Heart right ventricle (tissue), 16 donors: ENCODE measurements at regions of chr3 and their contacts with region 1.

Region 1: DNA sequence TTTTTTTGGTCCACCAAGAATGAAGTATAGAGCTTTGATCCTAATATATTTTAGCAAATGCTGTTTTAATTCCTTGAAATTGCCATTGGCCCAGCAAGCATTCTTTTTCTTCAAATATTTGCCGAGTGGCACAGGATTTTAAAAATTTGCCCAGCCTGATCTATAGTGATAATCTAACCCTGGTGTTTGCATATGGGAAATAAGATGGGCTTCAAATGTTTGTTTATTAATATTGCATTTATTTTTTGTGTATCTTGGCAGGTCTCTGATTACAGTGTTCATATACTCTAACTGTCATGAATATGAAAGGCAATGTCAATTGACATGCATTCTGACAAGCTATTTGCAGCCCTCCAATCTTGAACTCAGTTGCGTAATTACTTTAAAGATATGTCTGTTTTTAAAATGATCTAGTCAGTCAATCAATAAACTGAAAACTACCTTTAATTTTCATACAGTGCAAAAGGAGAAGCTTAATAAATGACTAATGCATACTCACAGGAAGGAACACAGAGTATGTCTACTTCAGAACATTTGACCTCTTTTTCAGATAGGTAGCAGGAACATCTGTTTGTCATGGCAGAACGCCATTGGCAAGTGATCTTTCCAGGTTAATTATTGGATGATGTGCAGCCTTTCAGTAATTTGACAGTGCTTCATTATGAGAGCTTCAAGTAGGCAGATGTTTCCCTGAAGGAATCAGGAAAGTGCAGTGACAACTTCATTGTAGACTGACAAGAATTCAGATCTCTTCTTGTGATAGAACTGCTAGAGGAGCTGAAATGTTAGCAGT is 324.8 kb downstream of the OTOL1 start:
- DNase-seq: no peak
- ATAC-seq: no peak
- H3K4me3 ChIP-seq: no peak overlapping the region
- H3K27ac ChIP-seq: no peak overlapping the region
- H3K4me1 ChIP-seq: no peaks in the 10 kb centered on the region
- H3K27me3 ChIP-seq: no peaks in the 10 kb centered on the region
- CTCF ChIP-seq: no peak

Region 2: DNA sequence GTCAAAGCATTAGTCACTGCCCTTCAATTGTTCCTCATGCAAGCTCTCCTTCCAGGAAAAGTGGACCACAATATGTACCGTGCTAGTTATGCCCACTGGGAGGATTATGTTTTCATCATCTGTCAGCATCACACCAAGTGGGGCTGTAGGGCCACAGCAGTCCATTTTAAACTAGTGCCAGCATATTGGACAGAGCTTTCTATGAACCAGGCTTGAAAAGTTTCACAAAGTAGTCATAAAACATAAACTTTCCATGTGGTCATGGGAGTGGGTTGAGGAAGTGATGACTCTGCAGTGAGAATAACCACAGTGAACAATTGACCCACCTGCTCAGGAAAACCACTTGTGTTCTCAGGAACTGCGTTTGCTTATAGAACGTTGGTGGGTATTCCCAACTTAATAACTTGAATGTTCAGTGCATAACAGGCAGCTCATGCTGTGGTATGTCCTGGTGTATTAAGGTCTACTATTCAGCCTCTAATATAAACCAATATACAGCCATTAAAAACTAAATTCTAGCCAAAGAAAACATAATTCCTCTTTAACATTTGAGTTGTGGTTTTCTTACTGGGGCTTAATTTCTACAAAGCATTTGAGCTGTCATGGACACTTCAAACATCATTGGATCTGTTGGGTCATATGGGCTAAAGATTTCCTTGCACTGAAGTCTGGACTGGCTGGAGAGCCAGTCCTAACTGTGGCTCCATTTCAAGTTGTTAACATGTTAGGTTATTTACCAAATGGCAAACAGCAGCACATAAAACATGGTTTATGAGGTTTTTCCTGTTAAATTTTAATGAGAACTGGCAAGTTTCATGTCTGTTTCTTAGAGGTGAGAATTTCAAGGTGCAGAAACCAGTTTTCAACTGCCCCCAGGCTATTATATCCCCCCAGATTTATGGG is 50.7 kb before region 1 on chr3:
- intact Hi-C with region 1: loop called in 1 of 10 experiments (anchors 2 kb)
- DNase-seq: no peak
- ATAC-seq: no peak
- H3K4me3 ChIP-seq: no peak overlapping the region
- H3K27ac ChIP-seq: no peak overlapping the region
- H3K4me1 ChIP-seq: no peaks in the 10 kb centered on the region
- H3K27me3 ChIP-seq: no peaks in the 10 kb centered on the region
- CTCF ChIP-seq: no peak

Region 3: DNA sequence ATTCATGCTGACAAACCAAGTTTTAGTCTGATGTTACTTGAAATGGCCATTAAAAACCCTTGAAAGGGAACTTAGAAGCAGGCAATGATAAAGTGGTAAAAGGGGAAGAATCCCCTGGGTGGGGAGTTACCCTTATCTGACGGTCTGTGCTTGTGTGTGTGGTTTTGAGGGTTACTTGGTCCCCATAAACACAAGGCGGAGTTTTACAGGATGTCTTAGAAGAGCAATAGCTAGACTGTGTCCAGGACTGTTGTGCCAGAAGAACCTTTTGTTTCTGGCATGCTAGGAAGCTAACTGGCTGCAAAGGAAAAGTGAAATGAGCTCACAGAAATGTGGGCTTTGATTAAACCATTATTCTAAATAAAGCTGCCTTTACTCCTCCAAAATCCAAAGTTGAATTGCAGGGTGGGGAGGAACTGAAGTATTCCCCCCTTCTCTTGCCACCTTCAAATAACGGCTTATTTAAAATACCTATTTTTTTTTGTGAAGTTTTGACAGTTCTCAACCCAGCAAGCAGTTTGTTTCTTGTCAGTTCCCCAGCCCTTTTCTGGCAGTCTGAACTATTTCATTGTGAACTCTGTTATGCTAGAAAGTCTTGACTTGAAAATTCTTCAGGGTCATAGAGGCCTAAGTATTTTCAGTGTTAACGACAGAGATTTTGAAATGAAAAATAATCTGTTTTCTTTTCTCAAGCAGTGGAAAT is 118.7 kb after region 1 on chr3:
- intact Hi-C with region 1: no loop called
- DNase-seq: no peak
- ATAC-seq: peak in 1 of 8 donors; percentile 82
- H3K4me3 ChIP-seq: peak overlapping the region in 1 of 10 donors; percentile 16
- H3K27ac ChIP-seq: peak overlapping the region in 2 of 10 donors; percentile 6 to 23
- H3K4me1 ChIP-seq: peaks cover 0 to 5% (median 0%) of the 10 kb centered on the region in 9 donors
- H3K27me3 ChIP-seq: no peaks in the 10 kb centered on the region
- CTCF ChIP-seq: no peak